CD4-positive, alpha-beta memory T cell (primary cell): ENCODE measurements at regions of chr14 and their contacts with region 1.

Region 1: GRCh38 chr14:91510174-91511042 is at the start of gene PPP4R3A:
- DNase-seq: peak; percentile 93 to 95 (median 95)
- H3K4me3 ChIP-seq: peak within 1 kb of the TSS; percentile 59 to 88
- H3K4me3 Mint-ChIP-seq: peak within 1 kb of the TSS; percentile 97 to 100 (median 100)
- H3K27ac ChIP-seq: peak within 1 kb of the TSS; percentile 99
- H3K27ac Mint-ChIP-seq: peak within 1 kb of the TSS; percentile 99 to 100 (median 100)
- H3K4me1 ChIP-seq: peaks cover 37% of the 10 kb centered on the region
- H3K4me1 Mint-ChIP-seq: peaks cover 21 to 44% (median 29%) of the 10 kb centered on the region in 4 donors
- H3K27me3 ChIP-seq: no peaks in the 10 kb centered on the region
- H3K27me3 Mint-ChIP-seq: no peaks in the 10 kb centered on the region
- total RNA-seq, gene PPP4R3A: 162 to 169 TPM

Region 2: DNA sequence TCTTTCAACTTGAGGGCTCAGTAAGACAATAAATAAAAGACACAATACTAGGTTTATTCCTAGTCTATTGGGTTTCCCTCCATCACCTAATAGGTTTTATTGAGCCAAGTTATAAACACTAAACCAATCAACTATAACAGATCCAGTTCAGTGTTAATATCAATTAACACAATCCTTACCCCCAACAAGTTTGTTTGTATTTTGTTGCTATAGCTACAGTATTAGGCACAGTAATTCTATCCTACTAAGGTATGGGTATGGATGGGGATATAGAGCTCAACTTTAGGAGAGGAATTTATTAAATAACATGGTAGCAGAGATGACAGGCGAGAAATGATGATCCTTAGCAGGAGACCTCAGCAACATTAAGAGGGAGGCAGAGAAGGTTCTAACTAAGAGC is 13.6 kb before region 1 on chr14:
- CTCF ChIA-PET with region 1: interaction called, 3 read pairs
- POLR2A ChIA-PET with region 1: interaction called, 24 read pairs
- intact Hi-C with region 1: loop called (anchors 1 kb)
- DNase-seq: no peak
- H3K4me3 ChIP-seq: no peak overlapping the region
- H3K4me3 Mint-ChIP-seq: peak overlapping the region; percentile 17 to 83 (median 70)
- H3K27ac ChIP-seq: peak overlapping the region; percentile 7
- H3K27ac Mint-ChIP-seq: peak overlapping the region in 6 of 7 donors; percentile 46 to 85 (median 75)
- H3K4me1 ChIP-seq: peaks cover 88% of the 10 kb centered on the region
- H3K4me1 Mint-ChIP-seq: peaks cover 62 to 94% (median 79%) of the 10 kb centered on the region in 4 donors
- H3K27me3 ChIP-seq: no peaks in the 10 kb centered on the region
- H3K27me3 Mint-ChIP-seq: no peaks in the 10 kb centered on the region

Region 3: GRCh38 chr14:91728616-91729183 is 218.3 kb after region 1 on chr14:
- CTCF ChIA-PET with region 1: no interaction called
- POLR2A ChIA-PET with region 1: no interaction called
- intact Hi-C with region 1: no loop called
- DNase-seq: no peak
- H3K4me3 ChIP-seq: no peak overlapping the region
- H3K4me3 Mint-ChIP-seq: no peak overlapping the region
- H3K27ac ChIP-seq: no peak overlapping the region
- H3K27ac Mint-ChIP-seq: no peak overlapping the region
- H3K4me1 ChIP-seq: no peaks in the 10 kb centered on the region
- H3K4me1 Mint-ChIP-seq: no peaks in the 10 kb centered on the region
- H3K27me3 ChIP-seq: no peaks in the 10 kb centered on the region
- H3K27me3 Mint-ChIP-seq: no peaks in the 10 kb centered on the region

Region 4: DNA sequence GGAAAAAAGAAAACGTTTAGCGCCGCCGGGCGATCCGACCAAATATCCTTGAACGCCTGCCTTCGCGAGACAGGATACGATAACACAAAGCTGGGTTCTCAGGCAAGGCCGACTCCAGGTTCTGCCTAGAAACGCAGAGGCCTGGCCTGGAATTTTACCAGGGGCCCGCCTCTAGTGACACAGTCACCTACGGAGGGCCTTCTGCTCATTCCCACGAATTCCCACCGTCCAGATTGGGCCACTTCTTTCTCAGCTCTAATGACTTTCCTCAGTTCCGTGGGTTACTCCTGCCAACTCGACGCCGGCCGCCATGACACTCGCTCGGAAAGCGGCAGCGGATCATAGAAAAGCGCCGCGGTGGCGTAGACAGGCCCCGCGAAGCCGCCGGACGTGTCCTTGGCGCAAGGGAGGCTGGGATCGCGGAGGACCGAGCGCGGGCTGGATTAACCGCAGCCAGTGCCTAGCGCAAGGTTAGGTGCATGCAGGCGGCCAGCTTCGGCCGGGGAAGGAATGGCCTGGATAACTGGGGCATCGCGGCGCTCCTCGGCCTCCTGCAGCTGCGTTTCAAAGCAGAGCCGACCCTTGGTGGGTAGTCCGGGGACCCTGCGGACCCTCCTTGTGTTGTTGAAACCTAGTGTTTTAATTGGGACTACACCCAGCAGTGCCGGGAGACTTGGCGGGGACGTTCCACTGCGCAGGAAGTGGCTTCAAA is 529.5 kb after region 1 on chr14 and contains the start of gene TRIP11:
- CTCF ChIA-PET with region 1: no interaction called
- POLR2A ChIA-PET with region 1: interaction called, 17 read pairs
- intact Hi-C with region 1: loop called (anchors 1 kb)
- DNase-seq: peak; percentile 94 to 97 (median 95)
- H3K4me3 ChIP-seq: peak within 1 kb of the TSS; percentile 51 to 71
- H3K4me3 Mint-ChIP-seq: peak within 1 kb of the TSS; percentile 93 to 100 (median 96)
- H3K27ac ChIP-seq: peak within 1 kb of the TSS; percentile 89
- H3K27ac Mint-ChIP-seq: peak within 1 kb of the TSS; percentile 97 to 99 (median 99)
- H3K4me1 ChIP-seq: peaks cover 43% of the 10 kb centered on the region
- H3K4me1 Mint-ChIP-seq: peaks cover 31 to 59% (median 43%) of the 10 kb centered on the region in 4 donors
- H3K27me3 ChIP-seq: no peaks in the 10 kb centered on the region
- H3K27me3 Mint-ChIP-seq: no peaks in the 10 kb centered on the region
- total RNA-seq, gene TRIP11: 68.0 to 68.7 TPM